Brain microvascular endothelial cell (primary cell): ENCODE measurements at regions of chr6 and their contacts with region 1.

Region 1: DNA sequence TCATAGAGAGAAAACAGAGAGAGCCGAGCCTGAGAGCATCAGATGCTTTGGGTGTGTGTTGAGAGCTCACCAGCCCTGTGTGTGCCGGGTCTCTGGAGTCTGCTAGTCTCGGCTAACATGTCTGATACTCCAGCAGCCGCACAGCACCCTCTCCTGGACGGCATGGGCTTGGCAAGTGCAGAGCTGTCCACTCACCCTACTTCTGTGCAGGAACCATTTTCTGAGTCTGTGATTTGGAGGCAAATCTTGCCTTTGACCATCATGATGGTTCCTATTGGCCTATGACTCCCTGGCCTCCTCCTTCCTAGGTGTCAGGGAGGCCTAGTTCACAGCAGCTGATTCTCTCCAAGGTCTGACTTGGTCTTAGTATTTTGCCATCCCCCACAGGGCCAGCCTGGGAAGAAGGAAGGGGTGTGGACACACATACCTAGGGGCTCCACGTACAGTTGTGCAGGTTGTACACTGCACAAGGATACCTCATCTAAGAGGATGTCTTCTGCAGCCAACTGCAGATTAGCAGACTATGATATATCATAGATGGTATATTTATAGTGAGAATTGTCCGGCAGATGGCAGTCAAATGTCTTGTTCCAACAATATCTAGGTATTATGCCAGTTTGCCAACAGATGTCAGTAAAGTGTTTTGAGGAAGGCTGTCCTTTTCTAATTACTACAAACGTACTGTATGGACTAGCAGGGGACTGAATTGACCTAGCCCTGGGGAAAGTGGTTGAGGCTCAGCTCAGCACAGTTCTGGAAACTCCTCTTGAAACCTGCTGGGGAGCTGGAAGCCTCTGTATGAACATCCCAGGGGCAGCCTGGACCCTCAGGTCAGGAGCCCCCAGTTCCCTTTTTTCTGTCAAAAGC is 13.0 kb downstream of the FGD2 start:
- DNase-seq: peak; percentile 89
- H3K4me3 ChIP-seq: no peak overlapping the region
- H3K27ac ChIP-seq: no peak overlapping the region
- H3K27me3 ChIP-seq: no peaks in the 10 kb centered on the region
- CTCF ChIP-seq: peak; percentile 98

Region 2: DNA sequence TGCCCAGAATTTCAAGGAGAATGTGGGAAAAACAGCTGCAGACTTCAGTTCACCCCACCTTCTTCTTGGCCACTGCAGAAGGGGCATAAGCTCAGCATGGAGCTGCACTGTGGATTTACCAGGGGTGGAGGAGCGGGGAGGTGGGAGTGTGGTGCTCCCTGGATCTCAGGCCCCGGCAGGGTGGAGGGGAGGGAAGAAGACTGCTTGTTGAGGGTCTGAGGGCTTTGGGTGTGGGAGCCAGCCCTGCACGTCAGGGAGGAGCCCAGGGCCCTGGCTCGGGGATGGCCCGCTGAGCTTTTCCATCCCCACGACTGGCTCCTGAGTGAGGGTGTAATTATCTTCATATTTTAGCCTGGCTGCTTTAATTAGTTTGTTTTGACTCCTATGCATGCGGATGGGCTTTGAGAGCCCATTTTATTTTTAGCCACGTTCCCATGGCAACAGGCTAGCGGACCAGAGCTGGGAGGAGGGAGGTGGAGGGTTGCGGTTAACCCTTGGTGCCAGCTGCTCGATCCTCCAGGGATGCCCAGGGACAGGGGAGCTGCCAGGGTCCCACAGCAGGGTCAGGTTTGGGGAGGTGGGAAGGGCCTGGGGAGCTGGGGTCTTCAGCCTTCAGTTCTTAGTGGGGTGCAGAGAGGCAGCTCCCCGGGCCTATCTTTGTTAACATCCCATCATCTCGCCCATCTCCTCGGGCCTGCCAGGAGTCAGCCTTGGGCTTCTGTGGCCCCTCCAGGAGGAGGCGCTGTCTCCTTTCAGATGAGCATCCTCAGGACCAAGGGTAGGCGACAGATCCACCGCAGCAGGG is 252.6 kb before region 1 on chr6:
- in situ Hi-C with region 1: loop called (anchors 25 kb)
- DNase-seq: peak; percentile 80
- H3K4me3 ChIP-seq: no peak overlapping the region
- H3K27ac ChIP-seq: no peak overlapping the region
- H3K27me3 ChIP-seq: no peaks in the 10 kb centered on the region
- CTCF ChIP-seq: peak; percentile 98